ENCODE measurements at regions of chr1 and their contacts with region 1.

Region 1: DNA sequence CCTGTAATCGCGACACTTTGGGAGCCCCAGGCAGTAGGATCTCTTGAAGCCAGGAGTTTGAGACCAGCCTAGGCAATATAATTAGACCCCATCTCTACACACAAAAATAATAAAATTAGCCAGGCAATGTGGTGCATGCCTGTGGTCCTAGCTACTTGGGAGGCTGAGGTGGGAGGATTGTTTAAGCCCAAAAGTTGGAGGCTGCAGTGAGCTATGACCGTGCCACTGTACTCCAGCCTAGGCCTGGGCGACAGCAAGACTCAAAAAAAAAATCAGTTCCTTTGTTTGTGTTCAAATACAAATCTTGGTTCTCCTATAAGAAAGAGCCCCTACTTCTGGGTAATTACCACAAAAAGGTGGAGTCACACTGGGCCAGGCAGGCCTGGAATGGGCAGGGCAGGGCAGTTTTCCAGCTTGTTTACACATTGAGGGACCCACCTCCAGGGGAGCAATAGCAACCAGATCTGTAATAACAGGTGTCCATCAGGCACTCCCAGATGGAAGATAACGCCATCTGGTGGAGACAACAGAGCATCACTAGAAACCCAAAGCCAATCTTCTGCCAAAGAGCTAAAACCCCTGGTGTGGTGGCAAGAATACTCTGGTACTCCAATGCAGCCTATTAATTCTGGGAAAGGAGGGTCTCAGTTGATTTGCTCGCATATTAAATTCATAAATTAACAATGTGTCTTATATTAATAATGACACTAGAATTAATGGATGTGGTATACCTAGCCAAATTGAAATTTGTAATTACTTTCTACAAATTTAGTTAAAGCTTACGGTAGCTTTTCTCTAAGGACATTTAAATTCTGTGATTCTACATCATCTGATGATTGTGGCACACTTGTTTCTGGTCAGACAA is 13.2 kb downstream of the PPP1R15B start:
- DNase-seq: peak; percentile 73
- ATAC-seq: peak; percentile 83
- H3K4me3 Mint-ChIP-seq: no peak overlapping the region
- H3K27ac Mint-ChIP-seq: peak overlapping the region; percentile 65
- H3K4me1 Mint-ChIP-seq: peaks cover 2% of the 10 kb centered on the region
- H3K27me3 Mint-ChIP-seq: no peaks in the 10 kb centered on the region

Region 2: DNA sequence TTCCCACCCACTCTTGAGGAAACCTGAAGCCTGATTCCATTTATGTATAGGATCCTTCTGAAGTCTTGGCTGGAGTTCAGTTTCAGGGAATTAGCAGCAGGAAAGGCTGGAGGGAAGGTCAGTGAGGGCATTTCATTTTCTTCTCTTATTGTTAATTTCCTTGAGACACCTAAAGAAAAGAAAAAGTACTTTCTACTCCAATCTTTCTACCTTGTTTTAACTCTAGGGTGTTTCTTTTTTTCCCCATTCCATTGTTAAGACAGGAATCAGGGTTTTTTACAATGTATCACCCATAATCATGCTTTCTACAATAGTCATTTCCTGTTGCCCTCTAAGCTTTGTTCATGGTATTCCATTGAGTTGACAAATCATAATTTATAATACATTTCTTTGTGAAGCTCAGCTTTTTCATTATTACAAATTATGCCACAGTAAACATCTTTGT is 509.6 kb before region 1 on chr1:
- CTCF ChIA-PET with region 1: no interaction called
- POLR2A ChIA-PET with region 1: no interaction called
- DNase-seq: no peak
- ATAC-seq: no peak
- H3K4me3 Mint-ChIP-seq: no peak overlapping the region
- H3K27ac Mint-ChIP-seq: no peak overlapping the region
- H3K4me1 Mint-ChIP-seq: no peaks in the 10 kb centered on the region
- H3K27me3 Mint-ChIP-seq: no peaks in the 10 kb centered on the region

Region 3: GRCh38 chr1:204171751-204172178 is 226.7 kb before region 1 on chr1:
- CTCF ChIA-PET with region 1: interaction called, 10 read pairs
- POLR2A ChIA-PET with region 1: no interaction called
- DNase-seq: no peak
- ATAC-seq: no peak
- H3K4me3 Mint-ChIP-seq: no peak overlapping the region
- H3K27ac Mint-ChIP-seq: no peak overlapping the region
- H3K4me1 Mint-ChIP-seq: no peaks in the 10 kb centered on the region
- H3K27me3 Mint-ChIP-seq: no peaks in the 10 kb centered on the region

Region 4: DNA sequence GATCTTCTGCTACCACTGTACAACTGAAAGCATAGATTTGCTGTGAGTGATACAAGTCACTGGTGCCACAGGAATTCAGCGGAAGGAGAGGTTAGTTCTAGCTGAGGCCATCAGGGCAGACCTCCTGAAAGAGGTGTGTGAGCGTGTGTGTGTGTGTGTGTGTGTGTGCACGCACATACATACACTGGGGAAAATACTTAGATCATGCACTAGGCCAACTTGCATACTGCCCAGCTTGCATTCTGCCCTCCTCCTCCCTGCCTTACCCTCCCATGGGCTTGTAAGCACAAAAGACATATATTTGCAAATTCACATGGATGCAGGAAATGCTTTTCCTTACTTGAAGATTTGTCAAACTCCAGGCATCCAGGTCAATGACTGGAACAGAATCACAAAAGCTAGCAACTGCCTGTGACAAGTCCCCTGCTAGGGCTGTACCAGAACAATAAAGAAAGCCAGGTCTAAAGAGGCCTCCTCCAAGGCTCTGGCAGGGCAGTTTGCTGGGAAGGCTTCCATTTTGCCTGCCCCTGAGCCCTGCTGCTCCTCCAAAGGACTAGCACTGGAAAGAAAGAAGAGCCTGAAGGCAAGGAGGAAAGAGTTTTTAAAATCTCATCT is 61.9 kb before region 1 on chr1:
- CTCF ChIA-PET with region 1: no interaction called
- POLR2A ChIA-PET with region 1: no interaction called
- DNase-seq: no peak
- ATAC-seq: no peak
- H3K4me3 Mint-ChIP-seq: no peak overlapping the region
- H3K27ac Mint-ChIP-seq: no peak overlapping the region
- H3K4me1 Mint-ChIP-seq: no peaks in the 10 kb centered on the region
- H3K27me3 Mint-ChIP-seq: peaks cover 2% of the 10 kb centered on the region

Region 5: DNA sequence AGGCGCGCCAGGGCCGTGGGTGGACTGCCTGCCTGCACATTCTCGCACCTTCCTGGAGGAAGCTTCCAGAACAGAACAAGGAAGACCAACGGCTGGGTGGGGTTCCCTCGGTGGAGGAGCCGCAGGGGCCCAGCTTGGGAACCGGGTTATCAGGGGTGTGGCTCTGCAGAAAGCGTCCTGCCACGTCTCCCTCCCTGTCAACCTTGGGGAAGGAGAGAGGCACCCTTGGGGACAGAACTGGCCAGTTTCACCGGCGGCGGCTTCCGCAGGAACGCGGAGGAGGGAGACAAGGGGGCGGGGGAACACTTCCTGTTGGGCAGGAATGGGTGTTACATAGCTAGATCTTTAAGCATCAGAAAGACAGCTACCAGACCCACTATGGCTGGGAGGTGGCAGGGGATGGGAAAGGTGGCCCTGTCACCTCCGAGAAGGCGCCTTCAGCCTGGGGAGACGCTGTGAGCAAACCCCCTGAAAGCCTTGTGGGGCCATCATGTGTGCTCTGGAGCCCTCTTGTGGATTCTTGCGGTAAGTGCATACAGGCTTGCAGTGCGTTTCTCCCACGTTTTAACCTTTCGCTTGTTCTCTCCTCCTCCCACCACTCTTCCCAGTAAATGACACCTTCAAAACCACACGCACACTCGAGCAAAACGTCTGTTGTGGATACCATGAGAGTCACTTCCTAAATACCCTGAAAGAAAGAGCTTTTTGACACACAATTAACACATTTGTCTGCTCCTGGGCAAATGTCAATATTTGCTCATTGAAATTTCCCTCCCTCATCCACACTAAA is 34.9 kb before region 1 on chr1:
- CTCF ChIA-PET with region 1: interaction called, 74 read pairs
- POLR2A ChIA-PET with region 1: no interaction called
- DNase-seq: peak; percentile 83
- ATAC-seq: peak; percentile 87
- H3K4me3 Mint-ChIP-seq: peak overlapping the region; percentile 48
- H3K27ac Mint-ChIP-seq: peak overlapping the region; percentile 51
- H3K4me1 Mint-ChIP-seq: peaks cover 12% of the 10 kb centered on the region
- H3K27me3 Mint-ChIP-seq: peaks cover 8% of the 10 kb centered on the region

Region 6: GRCh38 chr1:204377795-204378608 is 20.4 kb before region 1 on chr1:
- CTCF ChIA-PET with region 1: interaction called, 122 read pairs
- POLR2A ChIA-PET with region 1: no interaction called
- DNase-seq: peak; percentile 52
- ATAC-seq: peak; percentile 82
- H3K4me3 Mint-ChIP-seq: peak overlapping the region; percentile 77
- H3K27ac Mint-ChIP-seq: no peak overlapping the region
- H3K4me1 Mint-ChIP-seq: peaks cover 13% of the 10 kb centered on the region
- H3K27me3 Mint-ChIP-seq: peaks cover 26% of the 10 kb centered on the region

Region 7: DNA sequence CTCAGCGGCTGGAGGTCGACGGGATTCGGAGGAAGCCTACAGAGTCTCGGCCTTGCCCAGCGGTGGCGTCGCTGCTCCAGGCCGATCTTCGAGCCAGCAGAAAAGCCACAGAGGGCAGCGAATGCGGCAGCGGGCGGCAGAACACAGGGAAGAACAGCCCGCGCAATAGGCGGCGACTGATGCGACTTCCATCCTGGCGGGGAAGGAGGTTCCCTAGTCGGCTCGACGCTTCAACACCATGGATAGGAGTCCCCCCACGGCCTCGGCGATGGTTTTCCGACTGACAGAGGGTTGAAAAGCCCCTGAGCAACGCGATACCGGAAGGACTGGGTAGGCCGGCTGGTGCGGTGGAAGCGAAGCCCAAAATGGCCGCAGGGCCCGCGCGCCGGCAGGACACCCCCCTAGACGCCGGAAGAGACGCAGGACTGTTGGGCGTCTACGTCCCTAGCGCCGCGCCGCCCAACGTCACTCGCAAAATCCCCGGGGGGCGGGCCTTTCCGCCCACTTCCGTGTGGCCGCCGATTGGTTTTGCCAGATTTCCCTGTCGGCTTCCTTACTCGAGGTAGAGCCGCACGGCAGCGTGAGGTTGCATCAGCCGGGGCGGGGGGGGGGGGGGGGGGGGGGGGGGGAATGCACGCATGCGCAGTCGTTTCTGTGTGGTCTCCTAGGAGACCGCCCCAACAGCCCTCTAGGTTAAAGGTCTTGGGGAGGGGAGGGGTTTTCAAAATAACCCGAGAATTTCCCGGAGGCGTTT is 13.2 kb after region 1 on chr1 and contains the start of gene PPP1R15B:
- CTCF ChIA-PET with region 1: interaction called, 133 read pairs
- POLR2A ChIA-PET with region 1: interaction called, 6 read pairs
- DNase-seq: peak; percentile 98
- ATAC-seq: peak; percentile 90
- H3K4me3 Mint-ChIP-seq: peak within 1 kb of the TSS; percentile 99
- H3K27ac Mint-ChIP-seq: peak within 1 kb of the TSS; percentile 100
- H3K4me1 Mint-ChIP-seq: peaks cover 12% of the 10 kb centered on the region
- H3K27me3 Mint-ChIP-seq: no peaks in the 10 kb centered on the region
- total RNA-seq, gene PPP1R15B: 64.7 to 66.0 TPM

Region 8: GRCh38 chr1:204438628-204439027 is 40.2 kb after region 1 on chr1:
- CTCF ChIA-PET with region 1: interaction called, 13 read pairs
- POLR2A ChIA-PET with region 1: no interaction called
- DNase-seq: no peak
- ATAC-seq: no peak
- H3K4me3 Mint-ChIP-seq: no peak overlapping the region
- H3K27ac Mint-ChIP-seq: no peak overlapping the region
- H3K4me1 Mint-ChIP-seq: no peaks in the 10 kb centered on the region
- H3K27me3 Mint-ChIP-seq: no peaks in the 10 kb centered on the region

Region 9: DNA sequence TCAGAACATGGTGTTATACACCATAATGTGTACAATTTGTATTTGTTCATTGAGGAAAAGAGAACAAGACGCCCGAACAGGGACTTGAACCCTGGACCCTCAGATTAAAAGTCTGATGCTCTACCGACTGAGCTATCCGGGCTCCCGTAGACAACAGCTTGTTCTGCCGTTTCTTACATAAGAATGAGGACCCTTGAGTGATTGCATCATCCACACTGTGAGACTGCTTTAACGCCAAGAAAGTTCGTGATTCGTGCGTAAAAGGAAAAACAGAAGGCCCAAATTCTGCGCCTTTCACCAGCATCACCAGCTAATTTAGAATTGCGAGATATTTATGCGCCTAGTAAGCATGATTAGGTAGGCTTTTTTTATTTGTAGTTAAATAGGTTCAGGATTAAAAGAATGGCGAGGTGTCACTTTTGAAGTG is 108.5 kb after region 1 on chr1:
- CTCF ChIA-PET with region 1: interaction called, 44 read pairs
- POLR2A ChIA-PET with region 1: no interaction called
- DNase-seq: peak; percentile 94
- ATAC-seq: peak; percentile 82
- H3K4me3 Mint-ChIP-seq: peak overlapping the region; percentile 88
- H3K27ac Mint-ChIP-seq: peak overlapping the region; percentile 97
- H3K4me1 Mint-ChIP-seq: peaks cover 42% of the 10 kb centered on the region
- H3K27me3 Mint-ChIP-seq: no peaks in the 10 kb centered on the region

Region 10: GRCh38 chr1:204685236-204686006 is 287.0 kb after region 1 on chr1 and contains the start of gene LRRN2:
- CTCF ChIA-PET with region 1: no interaction called
- POLR2A ChIA-PET with region 1: no interaction called
- DNase-seq: no peak
- ATAC-seq: peak; percentile 63
- H3K4me3 Mint-ChIP-seq: peak within 1 kb of the TSS; percentile 42
- H3K27ac Mint-ChIP-seq: no peak within 1 kb of the TSS
- H3K4me1 Mint-ChIP-seq: peaks cover 14% of the 10 kb centered on the region
- H3K27me3 Mint-ChIP-seq: peaks cover 48% of the 10 kb centered on the region
- total RNA-seq, gene LRRN2: not detected